GM12878 (cell line): ENCODE measurements at regions of chr2 and their contacts with region 1.

Region 1: GRCh38 chr2:42457011-42457410 is 36.8 kb downstream of the KCNG3 start:
- DNase-seq: no peak
- ATAC-seq: no peak
- H3K4me3 ChIP-seq: no peak overlapping the region
- H3K27ac ChIP-seq: no peak overlapping the region
- H3K4me1 ChIP-seq: no peaks in the 10 kb centered on the region
- H3K27me3 ChIP-seq: no peaks in the 10 kb centered on the region
- CTCF ChIP-seq: 0 out of 6 replicates have a peak, but pooled peaks of 1 of the 3 experiments have one; percentile 13
- EP300 ChIP-seq: no peak
- POLR2A ChIP-seq: no peak
- RAD21 ChIP-seq: no peak

Region 2: DNA sequence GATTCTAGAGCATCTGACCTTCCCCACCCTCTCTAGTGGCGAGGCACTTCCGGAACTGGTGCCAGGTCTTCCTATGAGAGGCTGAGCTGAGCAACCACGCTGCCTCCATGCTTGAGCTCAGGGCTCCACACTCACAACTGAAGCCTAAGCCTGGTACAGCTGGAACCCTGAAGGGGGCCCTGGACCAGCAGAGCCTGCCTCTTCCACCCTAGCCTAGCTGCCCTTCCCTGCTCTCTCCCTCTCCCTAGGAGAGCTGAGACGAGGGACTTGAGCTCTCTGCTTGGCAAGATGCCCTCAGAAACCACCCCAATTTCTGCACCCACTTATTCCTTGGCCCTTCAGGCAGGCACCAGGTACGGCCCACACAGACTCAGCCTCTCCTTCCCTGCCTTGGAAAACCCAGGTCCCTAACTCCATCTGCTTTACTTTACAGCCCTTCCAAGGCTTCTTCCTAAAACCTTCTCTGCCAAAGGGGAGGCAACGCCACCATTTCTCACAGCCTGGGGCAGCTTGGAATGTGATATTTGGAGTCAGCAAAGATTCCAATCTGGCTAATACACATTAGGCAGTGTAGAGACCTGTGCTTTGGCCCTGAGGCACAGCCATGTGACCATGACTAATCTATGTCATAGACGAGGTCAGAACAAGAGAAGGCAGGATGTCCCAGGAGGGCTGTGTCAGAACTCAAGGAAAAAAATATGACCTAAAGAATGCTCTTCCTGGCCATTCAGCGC is 114.8 kb before region 1 on chr2:
- CTCF ChIA-PET with region 1: no interaction called
- POLR2A ChIA-PET with region 1: no interaction called
- RAD21 ChIA-PET with region 1: no interaction called
- SMC1A ChIA-PET with region 1: no interaction called
- in situ Hi-C with region 1: no loop called
- intact Hi-C with region 1: no loop called
- DNase-seq: no peak
- ATAC-seq: peak; percentile 69
- H3K4me3 ChIP-seq: no peak overlapping the region
- H3K27ac ChIP-seq: no peak overlapping the region; the same call in 1 of the 2 replicates
- H3K4me1 ChIP-seq: no peaks in the 10 kb centered on the region
- H3K27me3 ChIP-seq: no peaks in the 10 kb centered on the region
- CTCF ChIP-seq: no peak
- EP300 ChIP-seq: no peak
- POLR2A ChIP-seq: no peak; the same call in 1 of the 2 replicates
- RAD21 ChIP-seq: no peak

Region 3: DNA sequence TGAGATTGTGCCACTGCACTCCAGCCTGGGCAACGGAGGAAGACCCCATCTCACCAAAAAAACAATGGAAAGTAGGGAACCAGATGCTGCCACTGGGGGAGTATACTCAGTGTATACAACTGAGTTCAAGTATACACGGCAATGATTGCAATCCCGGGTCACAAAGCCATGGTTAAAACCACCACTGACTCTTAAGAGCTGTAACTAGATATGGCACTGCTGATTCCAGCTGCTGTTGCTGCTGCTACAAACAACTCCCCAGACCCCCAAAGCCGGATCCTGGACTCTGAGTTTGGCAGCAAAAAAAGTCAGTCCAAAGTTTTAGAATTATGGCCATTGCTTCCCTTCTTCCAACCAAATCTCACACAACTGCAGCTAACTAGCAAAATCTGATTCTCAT is 52.3 kb before region 1 on chr2:
- CTCF ChIA-PET with region 1: no interaction called
- POLR2A ChIA-PET with region 1: no interaction called
- RAD21 ChIA-PET with region 1: no interaction called
- SMC1A ChIA-PET with region 1: no interaction called
- in situ Hi-C with region 1: loop called (anchors 5 kb)
- intact Hi-C with region 1: no loop called
- DNase-seq: no peak
- ATAC-seq: no peak
- H3K4me3 ChIP-seq: no peak overlapping the region
- H3K27ac ChIP-seq: no peak overlapping the region
- H3K4me1 ChIP-seq: no peaks in the 10 kb centered on the region
- H3K27me3 ChIP-seq: no peaks in the 10 kb centered on the region; a peak in 1 of 4 replicates
- CTCF ChIP-seq: no peak
- EP300 ChIP-seq: no peak
- POLR2A ChIP-seq: no peak
- RAD21 ChIP-seq: no peak

Region 4: GRCh38 chr2:42424033-42424432 is 33.0 kb before region 1 on chr2:
- CTCF ChIA-PET with region 1: no interaction called
- POLR2A ChIA-PET with region 1: no interaction called
- RAD21 ChIA-PET with region 1: no interaction called
- SMC1A ChIA-PET with region 1: no interaction called
- in situ Hi-C with region 1: no loop called
- intact Hi-C with region 1: no loop called
- DNase-seq: no peak
- ATAC-seq: no peak
- H3K4me3 ChIP-seq: no peak overlapping the region
- H3K27ac ChIP-seq: no peak overlapping the region
- H3K4me1 ChIP-seq: no peaks in the 10 kb centered on the region
- H3K27me3 ChIP-seq: no peaks in the 10 kb centered on the region; a peak in 1 of 4 replicates
- CTCF ChIP-seq: no peak
- EP300 ChIP-seq: no peak
- POLR2A ChIP-seq: no peak
- RAD21 ChIP-seq: no peak